Activated B cell treated with CpG ODN at 0.5 μM for 24 hours (primary cell): ENCODE measurements at regions of chr18 and their contacts with region 1.

Region 1: GRCh38 chr18:74495581-74496507 is at the start of gene CNDP2:
- DNase-seq: peak; percentile 99
- ATAC-seq: peak; percentile 81
- H3K4me3 Mint-ChIP-seq: peak within 1 kb of the TSS; percentile 99
- H3K27ac Mint-ChIP-seq: peak within 1 kb of the TSS; percentile 98
- H3K4me1 Mint-ChIP-seq: peaks cover 46% of the 10 kb centered on the region
- H3K27me3 Mint-ChIP-seq: no peaks in the 10 kb centered on the region
- CTCF ChIP-seq: no peak
- total RNA-seq, gene CNDP2: 193 and 208 TPM in 2 replicates

Region 2: GRCh38 chr18:74063023-74063422 is 432.8 kb before region 1 on chr18:
- CTCF ChIA-PET with region 1: no interaction called
- POLR2A ChIA-PET with region 1: no interaction called
- intact Hi-C with region 1: loop called (anchors 5 kb)
- DNase-seq: no peak
- ATAC-seq: peak; percentile 76
- H3K4me3 Mint-ChIP-seq: peak overlapping the region; percentile 12
- H3K27ac Mint-ChIP-seq: peak overlapping the region; percentile 85
- H3K4me1 Mint-ChIP-seq: peaks cover 57% of the 10 kb centered on the region
- H3K27me3 Mint-ChIP-seq: peaks cover 9% of the 10 kb centered on the region
- CTCF ChIP-seq: no peak

Region 3: GRCh38 chr18:74196220-74197119 is 299.4 kb before region 1 on chr18:
- CTCF ChIA-PET with region 1: interaction called, 11 read pairs
- POLR2A ChIA-PET with region 1: no interaction called
- intact Hi-C with region 1: loop called (anchors 1 kb)
- DNase-seq: no peak
- ATAC-seq: peak; percentile 95
- H3K4me3 Mint-ChIP-seq: peak overlapping the region; percentile 78
- H3K27ac Mint-ChIP-seq: peak overlapping the region; percentile 79
- H3K4me1 Mint-ChIP-seq: peaks cover 22% of the 10 kb centered on the region
- H3K27me3 Mint-ChIP-seq: peaks cover 8% of the 10 kb centered on the region
- CTCF ChIP-seq: no peak

Region 4: GRCh38 chr18:74353169-74353775 is 142.6 kb before region 1 on chr18:
- CTCF ChIA-PET with region 1: interaction called, 25 read pairs
- POLR2A ChIA-PET with region 1: interaction called, 4 read pairs
- intact Hi-C with region 1: loop called (anchors 1 kb)
- DNase-seq: no peak
- ATAC-seq: peak; percentile 40
- H3K4me3 Mint-ChIP-seq: no peak overlapping the region
- H3K27ac Mint-ChIP-seq: no peak overlapping the region
- H3K4me1 Mint-ChIP-seq: peaks cover 13% of the 10 kb centered on the region
- H3K27me3 Mint-ChIP-seq: no peaks in the 10 kb centered on the region
- CTCF ChIP-seq: no peak

Region 5: DNA sequence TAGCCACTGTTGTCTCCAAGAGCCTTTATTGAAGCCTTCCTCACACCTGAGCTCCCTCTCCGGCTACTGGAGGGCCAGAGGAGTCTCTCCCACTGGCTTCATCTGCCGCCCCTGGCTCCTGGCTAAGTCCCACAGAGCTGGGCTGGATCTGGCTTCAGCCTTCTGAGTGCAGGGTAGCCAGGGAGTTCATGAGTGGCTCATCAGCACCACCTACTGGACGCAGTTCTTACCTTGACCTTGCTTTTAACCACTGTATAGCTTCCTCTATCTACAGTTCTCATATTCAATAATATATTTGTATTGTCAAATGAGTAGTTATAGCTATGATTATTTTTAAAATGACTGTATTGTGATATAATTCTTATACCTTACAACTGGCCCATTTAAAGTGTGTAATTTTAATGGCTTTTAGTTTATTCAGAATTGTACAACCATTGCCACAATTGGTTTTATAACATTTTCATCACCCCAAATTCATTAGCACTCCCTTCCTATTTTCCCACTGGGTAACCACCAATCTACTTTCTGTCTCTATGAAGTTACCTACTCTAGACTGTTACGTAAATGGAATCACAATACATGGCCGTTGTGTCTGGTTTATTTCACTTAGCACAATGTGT is 56.2 kb after region 1 on chr18:
- CTCF ChIA-PET with region 1: interaction called, 11 read pairs
- POLR2A ChIA-PET with region 1: interaction called, 5 read pairs
- intact Hi-C with region 1: loop called (anchors 1 kb)
- DNase-seq: peak; percentile 41
- ATAC-seq: peak; percentile 97
- H3K4me3 Mint-ChIP-seq: no peak overlapping the region
- H3K27ac Mint-ChIP-seq: no peak overlapping the region
- H3K4me1 Mint-ChIP-seq: no peaks in the 10 kb centered on the region
- H3K27me3 Mint-ChIP-seq: peaks cover 14% of the 10 kb centered on the region
- CTCF ChIP-seq: no peak

Region 6: DNA sequence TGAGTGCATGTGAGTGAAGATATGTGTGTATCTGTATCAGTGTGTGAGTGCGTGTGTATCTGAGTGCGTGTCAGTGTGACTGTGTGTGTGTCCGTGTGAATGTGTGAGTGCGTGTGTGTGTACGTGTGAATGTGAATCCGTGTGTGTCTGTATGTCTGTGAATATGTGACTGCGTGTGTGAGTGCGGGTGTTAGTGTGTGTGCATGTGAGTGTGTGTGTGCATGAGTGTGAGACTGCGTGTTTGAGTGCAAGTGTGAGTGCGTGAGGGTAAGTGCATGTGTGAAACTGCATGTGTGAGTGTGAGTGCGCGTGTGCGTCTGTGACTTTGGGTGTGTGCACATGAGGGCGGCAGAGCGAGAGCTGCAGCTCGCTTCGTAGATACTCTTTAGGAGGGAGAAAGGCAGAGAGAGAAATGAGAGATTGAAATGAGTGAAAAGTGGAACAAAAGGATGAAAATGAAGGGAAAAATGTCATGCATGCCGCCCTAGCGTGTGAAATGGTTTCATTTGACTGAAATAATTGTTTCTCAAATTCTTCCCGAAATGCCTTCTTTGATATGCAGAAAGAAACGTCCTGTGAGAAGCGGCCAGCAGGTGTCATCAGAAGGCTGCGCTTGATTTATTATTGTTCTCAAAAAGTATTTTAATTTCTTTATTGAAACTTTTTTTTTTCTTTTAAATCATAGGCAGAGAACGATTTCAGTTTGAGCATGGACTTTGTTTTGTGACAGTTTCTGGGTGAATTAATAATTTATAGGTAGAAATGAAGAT is 127.4 kb after region 1 on chr18:
- CTCF ChIA-PET with region 1: no interaction called
- POLR2A ChIA-PET with region 1: no interaction called
- intact Hi-C with region 1: no loop called
- DNase-seq: no peak
- ATAC-seq: no peak
- H3K4me3 Mint-ChIP-seq: no peak overlapping the region
- H3K27ac Mint-ChIP-seq: no peak overlapping the region
- H3K4me1 Mint-ChIP-seq: peaks cover 11% of the 10 kb centered on the region
- H3K27me3 Mint-ChIP-seq: no peaks in the 10 kb centered on the region
- CTCF ChIP-seq: no peak

Region 7: DNA sequence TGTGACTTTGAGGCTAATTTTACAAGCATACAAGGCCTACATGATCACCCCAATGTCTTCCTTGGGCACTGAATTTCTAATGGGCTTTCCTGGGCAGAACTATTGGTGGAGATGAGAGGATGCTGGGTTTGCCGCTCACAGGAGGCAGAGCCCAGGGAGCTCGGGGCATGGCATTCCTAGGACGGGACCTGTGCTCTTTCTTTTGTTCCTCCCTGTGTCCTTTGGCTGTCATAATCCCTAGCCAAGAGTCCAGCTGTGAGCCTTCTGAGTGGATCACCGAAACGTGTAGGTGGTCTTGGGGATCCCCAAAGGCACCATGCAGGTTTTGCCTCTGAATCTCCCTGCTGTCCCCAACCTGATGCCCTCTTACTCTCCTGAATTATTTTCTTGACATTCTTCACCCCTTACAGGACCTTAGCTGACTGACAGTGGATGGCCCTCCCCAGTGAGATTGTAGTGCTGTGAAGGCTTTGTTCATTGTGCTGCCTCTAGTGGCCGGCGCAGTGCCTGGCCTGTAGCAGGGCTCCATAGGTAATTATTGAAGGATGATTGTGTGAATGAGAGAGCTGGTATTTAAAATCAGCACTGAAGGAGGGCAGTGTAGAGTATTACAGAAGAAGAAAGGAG is 323.7 kb after region 1 on chr18:
- CTCF ChIA-PET with region 1: no interaction called
- POLR2A ChIA-PET with region 1: no interaction called
- intact Hi-C with region 1: no loop called
- DNase-seq: no peak
- ATAC-seq: no peak
- H3K4me3 Mint-ChIP-seq: no peak overlapping the region
- H3K27ac Mint-ChIP-seq: no peak overlapping the region
- H3K4me1 Mint-ChIP-seq: no peaks in the 10 kb centered on the region
- H3K27me3 Mint-ChIP-seq: no peaks in the 10 kb centered on the region
- CTCF ChIP-seq: no peak

Region 8: GRCh38 chr18:76492669-76493212 is 1996.9 kb after region 1 on chr18:
- CTCF ChIA-PET with region 1: no interaction called
- POLR2A ChIA-PET with region 1: no interaction called
- intact Hi-C with region 1: loop called (anchors 5 kb)
- DNase-seq: peak; percentile 98
- ATAC-seq: peak; percentile 73
- H3K4me3 Mint-ChIP-seq: peak overlapping the region; percentile 91
- H3K27ac Mint-ChIP-seq: peak overlapping the region; percentile 88
- H3K4me1 Mint-ChIP-seq: peaks cover 36% of the 10 kb centered on the region
- H3K27me3 Mint-ChIP-seq: peaks cover 16% of the 10 kb centered on the region
- CTCF ChIP-seq: no peak